ENCODE measurements at regions of chr2 and their contacts with region 1.

Region 1: GRCh38 chr2:105114551-105114950 is 76.7 kb downstream of the MRPS9 start:
- DNase-seq: no peak
- ATAC-seq: peak; percentile 39
- H3K4me3 Mint-ChIP-seq: no peak overlapping the region
- H3K27ac Mint-ChIP-seq: no peak overlapping the region
- H3K4me1 Mint-ChIP-seq: peaks cover 6% of the 10 kb centered on the region
- H3K27me3 Mint-ChIP-seq: no peaks in the 10 kb centered on the region; the same call in 1 of the 2 replicates
- CTCF ChIP-seq: peak; percentile 53

Region 2: GRCh38 chr2:105081006-105081601 is 33.4 kb before region 1 on chr2:
- CTCF ChIA-PET with region 1: interaction called, 10 read pairs
- POLR2A ChIA-PET with region 1: no interaction called
- DNase-seq: peak; percentile 54
- ATAC-seq: peak; percentile 90
- H3K4me3 Mint-ChIP-seq: peak overlapping the region; percentile 35
- H3K27ac Mint-ChIP-seq: peak overlapping the region; percentile 60; the same call in 1 of the 2 replicates
- H3K4me1 Mint-ChIP-seq: peaks cover 34% of the 10 kb centered on the region
- H3K27me3 Mint-ChIP-seq: no peaks in the 10 kb centered on the region
- CTCF ChIP-seq: no peak

Region 3: GRCh38 chr2:105102963-105103421 is 11.6 kb before region 1 on chr2:
- CTCF ChIA-PET with region 1: interaction called, 13 read pairs
- POLR2A ChIA-PET with region 1: no interaction called
- DNase-seq: peak; percentile 83
- ATAC-seq: peak; percentile 97
- H3K4me3 Mint-ChIP-seq: peak overlapping the region; percentile 70
- H3K27ac Mint-ChIP-seq: peak overlapping the region; percentile 99
- H3K4me1 Mint-ChIP-seq: peaks cover 33% of the 10 kb centered on the region
- H3K27me3 Mint-ChIP-seq: no peaks in the 10 kb centered on the region; the same call in 1 of the 2 replicates
- CTCF ChIP-seq: no peak

Region 4: DNA sequence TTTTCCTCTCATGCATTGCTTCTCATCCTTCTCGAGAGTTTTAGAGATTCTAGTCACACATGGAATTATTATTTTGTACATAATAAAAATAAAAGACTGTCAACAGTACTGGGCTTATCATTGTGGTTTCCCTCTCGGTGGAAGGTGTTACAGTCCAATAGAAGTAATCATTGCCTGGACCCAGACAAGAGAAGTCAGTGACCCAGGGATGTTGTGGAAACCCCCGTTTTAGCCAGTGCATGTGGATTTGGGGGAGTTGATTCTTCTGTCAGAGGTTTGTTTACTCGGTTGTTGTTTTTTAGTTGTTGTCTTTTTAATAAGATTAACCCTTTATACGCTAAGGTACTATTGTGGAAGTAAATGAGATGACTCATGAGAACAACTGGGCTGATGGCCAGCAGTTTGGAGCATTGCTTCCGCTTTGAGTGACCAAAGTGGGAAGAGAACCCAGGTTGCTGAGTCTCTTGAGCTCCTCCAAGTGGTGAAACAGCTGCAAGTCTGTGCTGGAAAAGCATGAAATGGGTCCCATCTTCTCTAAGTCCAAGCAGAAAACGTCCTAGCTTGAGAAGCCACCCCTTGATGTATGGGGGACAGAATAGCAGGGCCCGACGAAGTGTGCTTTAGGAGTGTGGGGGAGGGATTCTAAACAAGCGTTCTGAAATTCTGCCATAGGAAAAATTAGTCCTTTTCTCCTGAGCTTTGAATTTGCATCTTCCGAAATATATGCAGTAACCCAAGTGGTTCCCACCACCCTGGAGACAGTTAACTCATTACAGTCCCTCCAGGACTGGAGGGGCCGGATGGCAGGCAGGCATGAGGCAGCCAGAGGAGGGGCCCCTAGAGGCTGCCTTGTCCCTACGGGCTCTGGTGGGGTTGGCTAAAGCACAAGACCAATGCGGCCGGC is 65.2 kb after region 1 on chr2:
- CTCF ChIA-PET with region 1: interaction called, 34 read pairs
- POLR2A ChIA-PET with region 1: no interaction called
- DNase-seq: peak; percentile 16
- ATAC-seq: peak; percentile 40
- H3K4me3 Mint-ChIP-seq: no peak overlapping the region
- H3K27ac Mint-ChIP-seq: no peak overlapping the region
- H3K4me1 Mint-ChIP-seq: peaks cover 33% of the 10 kb centered on the region
- H3K27me3 Mint-ChIP-seq: peaks cover 42% of the 10 kb centered on the region
- CTCF ChIP-seq: no peak

Region 5: GRCh38 chr2:105243961-105244360 is 129.4 kb after region 1 on chr2:
- CTCF ChIA-PET with region 1: interaction called, 200 read pairs
- POLR2A ChIA-PET with region 1: no interaction called
- DNase-seq: peak; percentile 67
- ATAC-seq: peak; percentile 93
- H3K4me3 Mint-ChIP-seq: no peak overlapping the region
- H3K27ac Mint-ChIP-seq: no peak overlapping the region
- H3K4me1 Mint-ChIP-seq: peaks cover 3% of the 10 kb centered on the region
- H3K27me3 Mint-ChIP-seq: peaks cover 2% of the 10 kb centered on the region; the same call in 1 of the 2 replicates
- CTCF ChIP-seq: peak; percentile 69

Measured in WTC11 (cell line).